ENCODE measurements at regions of chr3 and their contacts with region 1.

Region 1: GRCh38 chr3:47475570-47476329 is at the start of gene SCAP:
- DNase-seq: peak; percentile 90 to 98 (median 96)
- ATAC-seq: peak; percentile 90
- H3K4me3 ChIP-seq: peak within 1 kb of the TSS; percentile 58 to 83
- H3K4me3 Mint-ChIP-seq: peak within 1 kb of the TSS; percentile 93
- H3K27ac ChIP-seq: peak within 1 kb of the TSS; percentile 69 to 86
- H3K27ac Mint-ChIP-seq: peak within 1 kb of the TSS; percentile 94
- H3K4me1 ChIP-seq: peaks cover 28% of the 10 kb centered on the region
- H3K4me1 Mint-ChIP-seq: peaks cover 43% of the 10 kb centered on the region
- H3K27me3 ChIP-seq: no peaks in the 10 kb centered on the region
- H3K27me3 Mint-ChIP-seq: no peaks in the 10 kb centered on the region
- CTCF ChIP-seq: peak; percentile 97
- total RNA-seq, gene SCAP: 72.8 to 76.6 TPM

Region 2: GRCh38 chr3:47282424-47283192 is 193.1 kb before region 1 on chr3 and contains the starts of genes KIF9 and KLHL18:
- CTCF ChIA-PET with region 1: no interaction called
- POLR2A ChIA-PET with region 1: no interaction called
- intact Hi-C with region 1: loop called (anchors 2 kb)
- DNase-seq: peak; percentile 92 to 99 (median 96)
- ATAC-seq: peak; percentile 86
- H3K4me3 ChIP-seq: peak within 1 kb of the TSS; percentile 75 to 79
- H3K4me3 Mint-ChIP-seq: peak within 1 kb of the TSS; percentile 97
- H3K27ac ChIP-seq: peak within 1 kb of the TSS; percentile 98 to 99
- H3K27ac Mint-ChIP-seq: peak within 1 kb of the TSS; percentile 99
- H3K4me1 ChIP-seq: peaks cover 32% of the 10 kb centered on the region
- H3K4me1 Mint-ChIP-seq: peaks cover 40% of the 10 kb centered on the region
- H3K27me3 ChIP-seq: no peaks in the 10 kb centered on the region
- H3K27me3 Mint-ChIP-seq: no peaks in the 10 kb centered on the region
- CTCF ChIP-seq: no peak
- total RNA-seq, gene KIF9: 11.7 to 12.2 TPM
- total RNA-seq, gene KLHL18: 61.6 to 62.8 TPM

Region 3: GRCh38 chr3:47791193-47791855 is 315.6 kb after region 1 on chr3:
- CTCF ChIA-PET with region 1: no interaction called
- POLR2A ChIA-PET with region 1: no interaction called
- intact Hi-C with region 1: loop called (anchors 2 kb)
- DNase-seq: no peak
- ATAC-seq: no peak
- H3K4me3 ChIP-seq: no peak overlapping the region
- H3K4me3 Mint-ChIP-seq: no peak overlapping the region
- H3K27ac ChIP-seq: no peak overlapping the region
- H3K27ac Mint-ChIP-seq: no peak overlapping the region
- H3K4me1 ChIP-seq: no peaks in the 10 kb centered on the region
- H3K4me1 Mint-ChIP-seq: peaks cover 5% of the 10 kb centered on the region
- H3K27me3 ChIP-seq: no peaks in the 10 kb centered on the region
- H3K27me3 Mint-ChIP-seq: no peaks in the 10 kb centered on the region
- CTCF ChIP-seq: no peak

Measured in CD8-positive, alpha-beta T cell (primary cell).